ENCODE measurements at regions of chr6 and their contacts with region 1.

Region 1: DNA sequence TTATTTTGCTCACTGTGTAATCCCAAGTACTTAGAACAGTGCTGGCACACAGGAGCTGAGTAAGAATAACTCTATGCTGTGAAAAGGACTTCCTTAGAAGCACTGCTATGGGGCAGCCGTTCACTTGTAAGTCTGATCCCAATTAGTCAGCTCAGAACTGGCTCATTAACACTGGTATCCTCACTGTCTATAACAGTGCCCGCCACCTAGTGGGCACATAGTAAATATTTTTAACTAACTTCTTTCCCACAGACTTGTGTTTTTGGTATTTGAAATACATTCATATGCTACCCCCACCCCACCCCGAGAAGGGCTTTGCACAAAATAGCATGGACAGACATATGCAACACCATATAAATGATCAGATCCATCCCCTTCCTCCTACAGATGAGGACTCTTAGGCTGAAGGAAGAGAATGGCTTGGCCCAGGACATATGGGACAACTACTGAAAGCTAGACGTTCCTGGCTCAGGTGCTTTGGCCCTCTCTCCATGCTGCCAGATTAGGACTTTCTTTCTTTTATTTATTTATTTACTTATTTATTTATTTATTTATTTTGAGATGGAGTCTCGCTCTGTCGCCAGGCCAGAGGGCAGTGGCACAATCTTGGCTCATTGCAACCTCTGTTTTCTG is 47.1 kb downstream of the DST start:
- DNase-seq: peak in 2 of 3 donors; percentile 27 to 37
- ATAC-seq: peak; percentile 68 to 85
- H3K4me3 ChIP-seq: no peak overlapping the region
- H3K27ac ChIP-seq: no peak overlapping the region
- H3K4me1 ChIP-seq: peaks cover 2% of the 10 kb centered on the region
- H3K27me3 ChIP-seq: no peaks in the 10 kb centered on the region

Region 2: GRCh38 chr6:56353860-56354259 is 241.7 kb before region 1 on chr6:
- intact Hi-C with region 1: loop called in 3 of 4 experiments (anchors 1 to 10 kb)
- DNase-seq: no peak
- ATAC-seq: no peak
- H3K4me3 ChIP-seq: no peak overlapping the region
- H3K27ac ChIP-seq: no peak overlapping the region
- H3K4me1 ChIP-seq: no peaks in the 10 kb centered on the region
- H3K27me3 ChIP-seq: no peaks in the 10 kb centered on the region

Region 3: GRCh38 chr6:56359201-56359899 is 236.3 kb before region 1 on chr6:
- intact Hi-C with region 1: loop called (anchors 1 to 10 kb)
- DNase-seq: peak in 2 of 3 donors; percentile 31 to 50
- ATAC-seq: peak; percentile 79 to 84
- H3K4me3 ChIP-seq: no peak overlapping the region
- H3K27ac ChIP-seq: no peak overlapping the region
- H3K4me1 ChIP-seq: no peaks in the 10 kb centered on the region
- H3K27me3 ChIP-seq: no peaks in the 10 kb centered on the region

Region 4: GRCh38 chr6:56364827-56365313 is 230.7 kb before region 1 on chr6:
- intact Hi-C with region 1: loop called in 1 of 4 experiments (anchors 5 kb)
- DNase-seq: no peak
- ATAC-seq: no peak
- H3K4me3 ChIP-seq: no peak overlapping the region
- H3K27ac ChIP-seq: no peak overlapping the region
- H3K4me1 ChIP-seq: peaks cover 3% of the 10 kb centered on the region
- H3K27me3 ChIP-seq: no peaks in the 10 kb centered on the region

Region 5: DNA sequence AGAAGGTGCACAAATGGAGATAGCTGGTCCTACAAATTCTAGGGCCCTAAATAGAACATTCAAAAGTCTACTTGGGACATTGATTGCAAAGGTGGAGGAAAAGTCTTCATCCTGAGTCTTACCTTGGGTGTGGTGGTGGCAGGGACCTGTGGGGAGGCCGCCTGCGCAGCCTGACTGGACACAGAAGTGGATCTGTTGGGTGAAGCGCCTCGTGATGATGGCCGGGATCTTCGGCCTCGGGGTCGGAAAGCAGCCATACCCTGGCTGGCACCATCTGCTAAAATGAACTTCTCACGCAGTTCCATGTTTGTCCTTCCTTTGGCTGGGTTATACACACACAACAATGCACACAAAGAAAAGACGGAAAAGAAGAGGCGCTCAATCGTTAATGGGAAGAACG is 132.2 kb before region 1 on chr6:
- intact Hi-C with region 1: loop called in 1 of 4 experiments (anchors 10 kb)
- DNase-seq: no peak
- ATAC-seq: no peak
- H3K4me3 ChIP-seq: no peak overlapping the region
- H3K27ac ChIP-seq: no peak overlapping the region
- H3K4me1 ChIP-seq: no peaks in the 10 kb centered on the region
- H3K27me3 ChIP-seq: no peaks in the 10 kb centered on the region

Region 6: DNA sequence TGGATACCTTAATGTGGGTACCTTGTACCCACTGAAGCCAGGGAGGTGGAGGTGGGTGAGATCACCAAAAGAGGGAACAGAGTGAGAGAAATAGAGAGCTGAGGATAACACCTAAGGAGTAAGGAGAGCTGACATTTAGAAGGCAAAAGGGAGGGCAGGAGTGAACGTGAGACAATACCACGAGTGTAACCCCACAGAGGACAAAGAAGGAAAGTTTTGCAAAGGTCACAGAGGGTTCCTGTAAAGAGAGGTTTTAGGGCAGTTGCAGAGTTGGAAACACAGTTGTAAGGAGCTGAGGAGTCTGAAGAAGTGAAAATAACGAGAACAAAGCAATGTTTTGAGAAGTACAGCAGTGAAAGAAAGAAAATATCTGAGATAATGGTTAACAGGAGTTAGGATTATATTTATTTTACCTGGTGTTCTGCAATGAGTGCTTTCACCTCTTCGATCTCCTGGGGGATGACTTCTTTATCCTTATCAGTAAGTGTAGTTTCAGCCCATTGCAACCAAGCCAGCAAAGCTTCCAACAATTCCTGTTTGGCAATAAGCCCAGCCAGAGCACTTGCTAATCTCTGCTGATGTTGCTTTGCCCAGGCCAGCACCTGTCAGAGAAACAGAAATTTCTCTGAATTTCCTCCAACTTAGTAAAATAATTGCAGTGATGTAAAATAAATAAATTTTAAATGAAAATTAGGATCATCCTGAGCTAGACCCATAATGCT is 119.7 kb before region 1 on chr6:
- intact Hi-C with region 1: loop called in 1 of 4 experiments (anchors 10 kb)
- DNase-seq: peak in 1 of 3 donors; percentile 44
- ATAC-seq: peak; percentile 87 to 88
- H3K4me3 ChIP-seq: no peak overlapping the region
- H3K27ac ChIP-seq: no peak overlapping the region
- H3K4me1 ChIP-seq: peaks cover 5% of the 10 kb centered on the region
- H3K27me3 ChIP-seq: no peaks in the 10 kb centered on the region

Region 7: DNA sequence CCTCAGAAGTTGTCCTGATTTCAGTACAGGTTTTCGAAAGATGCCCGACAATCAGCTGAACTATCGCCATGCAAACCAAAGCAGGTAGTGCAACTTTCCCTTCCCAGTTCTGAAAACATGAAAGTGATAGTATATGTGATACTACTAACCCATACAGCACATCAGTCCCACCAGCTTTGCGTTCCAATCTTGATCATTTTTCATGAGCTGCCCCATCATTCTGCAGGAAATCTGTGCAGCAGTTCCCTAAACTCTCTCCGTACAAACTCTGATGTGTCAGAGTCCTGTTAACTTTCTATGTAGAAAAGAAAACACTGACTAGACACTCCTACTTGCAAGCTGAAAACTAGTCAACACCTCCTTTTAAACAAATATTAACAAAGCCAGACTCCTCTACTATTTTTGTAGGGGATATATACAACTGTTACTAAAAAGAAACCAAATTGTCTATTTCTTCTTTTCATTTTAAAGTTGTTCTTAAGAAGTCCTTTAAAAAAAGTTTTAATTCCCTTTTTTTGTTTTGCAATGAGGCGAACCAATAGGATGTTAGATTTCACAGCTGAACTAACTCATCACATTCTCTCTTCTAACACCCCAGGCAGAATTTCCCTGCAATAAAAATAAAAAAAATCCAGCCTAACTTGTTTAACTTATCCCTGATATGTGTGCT is 146.7 kb after region 1 on chr6:
- intact Hi-C with region 1: no loop called
- DNase-seq: no peak
- ATAC-seq: peak; percentile 25 to 51
- H3K4me3 ChIP-seq: peak overlapping the region; percentile 22
- H3K27ac ChIP-seq: no peak overlapping the region
- H3K4me1 ChIP-seq: peaks cover 11% of the 10 kb centered on the region
- H3K27me3 ChIP-seq: no peaks in the 10 kb centered on the region

Measured in right cardiac atrium (tissue), 5 donors.